Activated CD4-positive, alpha-beta memory T cell treated with anti-CD3 and anti-CD28 coated beads, Interleukin-2, amount 10 ng/mL, durations not matched to agents 7 days and 5 days (primary cell): ENCODE measurements at regions of chr19 and their contacts with region 1.

Region 1: GRCh38 chr19:53867225-53868090 is at the start of gene MYADM:
- DNase-seq: peak; percentile 100
- H3K4me3 Mint-ChIP-seq: peak within 1 kb of the TSS; percentile 97
- H3K27ac Mint-ChIP-seq: peak within 1 kb of the TSS; percentile 90
- H3K4me1 Mint-ChIP-seq: peaks cover 43% of the 10 kb centered on the region
- H3K27me3 Mint-ChIP-seq: peaks cover 2% of the 10 kb centered on the region
- total RNA-seq, gene MYADM: 109 TPM

Region 2: DNA sequence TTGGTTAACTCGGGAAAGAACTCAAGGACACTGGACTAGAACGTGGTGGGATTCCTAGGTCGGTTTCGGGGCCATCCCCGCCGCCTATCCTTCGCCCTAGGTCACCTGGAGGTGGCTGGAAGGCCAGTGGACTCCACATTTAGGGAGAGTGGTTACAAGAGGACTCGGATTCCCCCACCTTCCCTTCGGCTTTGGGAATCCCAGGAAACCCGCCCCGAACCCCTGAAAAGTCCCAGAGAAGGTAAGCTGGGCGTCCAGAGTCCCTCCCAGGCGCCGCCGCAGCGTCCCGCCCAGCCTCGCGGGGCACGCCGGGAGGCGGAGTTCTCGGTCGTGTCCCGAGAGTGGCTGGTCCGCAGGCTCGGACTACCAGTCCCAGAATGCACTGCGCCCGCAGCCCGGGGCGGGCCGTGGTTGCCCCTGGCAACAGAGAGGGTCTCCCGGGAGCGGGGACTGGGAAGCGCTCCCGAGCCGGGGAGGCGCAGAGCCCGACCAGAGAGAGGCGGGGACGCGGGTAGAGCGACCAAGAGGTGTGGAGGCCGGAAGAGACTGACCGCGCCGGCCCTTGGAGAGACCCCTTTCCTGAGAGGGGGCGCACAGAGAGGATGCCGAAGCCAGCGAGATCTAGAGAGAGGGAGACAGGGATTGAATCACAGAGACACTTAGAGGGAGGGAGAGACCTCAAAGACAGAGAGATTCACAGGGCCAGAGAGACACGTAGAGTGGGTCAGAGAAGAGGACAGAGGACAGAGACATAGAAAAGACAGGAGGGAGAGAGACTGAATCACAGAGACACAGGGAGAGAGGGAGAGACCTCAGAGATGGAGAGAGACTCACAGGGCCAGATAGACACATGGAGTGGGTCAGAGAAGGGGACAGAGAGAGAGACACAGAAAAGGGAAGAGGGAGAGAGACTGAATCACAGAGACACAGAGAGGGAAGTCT is 12.0 kb after region 1 on chr19:
- CTCF ChIA-PET with region 1: interaction called, 5 read pairs
- POLR2A ChIA-PET with region 1: interaction called, 12 read pairs
- DNase-seq: peak; percentile 86
- H3K4me3 Mint-ChIP-seq: no peak overlapping the region
- H3K27ac Mint-ChIP-seq: no peak overlapping the region
- H3K4me1 Mint-ChIP-seq: peaks cover 42% of the 10 kb centered on the region
- H3K27me3 Mint-ChIP-seq: peaks cover 17% of the 10 kb centered on the region